ENCODE measurements at regions of chr16 and their contacts with region 1.

Region 1: GRCh38 chr16:86882586-86883280 is 304.4 kb downstream of the FOXL1 start:
- DNase-seq: peak; percentile 52 to 61
- ATAC-seq: peak; percentile 58 to 88 (median 74)
- H3K4me3 ChIP-seq: no peak overlapping the region
- H3K27ac ChIP-seq: no peak overlapping the region
- H3K4me1 ChIP-seq: peaks cover 0 to 14% (median 6%) of the 10 kb centered on the region in 9 donors
- H3K27me3 ChIP-seq: peaks cover 0 to 22% (median 9%) of the 10 kb centered on the region in 7 donors
- CTCF ChIP-seq: no peak

Region 2: GRCh38 chr16:86823895-86824671 is 58.6 kb before region 1 on chr16:
- intact Hi-C with region 1: loop called in 1 of 10 experiments (anchors 10 kb)
- DNase-seq: no peak
- ATAC-seq: no peak
- H3K4me3 ChIP-seq: no peak overlapping the region
- H3K27ac ChIP-seq: no peak overlapping the region
- H3K4me1 ChIP-seq: peaks cover 0 to 12% (median 6%) of the 10 kb centered on the region in 9 donors
- H3K27me3 ChIP-seq: peaks cover 0 to 58% (median 27%) of the 10 kb centered on the region in 7 donors
- CTCF ChIP-seq: no peak

Region 3: DNA sequence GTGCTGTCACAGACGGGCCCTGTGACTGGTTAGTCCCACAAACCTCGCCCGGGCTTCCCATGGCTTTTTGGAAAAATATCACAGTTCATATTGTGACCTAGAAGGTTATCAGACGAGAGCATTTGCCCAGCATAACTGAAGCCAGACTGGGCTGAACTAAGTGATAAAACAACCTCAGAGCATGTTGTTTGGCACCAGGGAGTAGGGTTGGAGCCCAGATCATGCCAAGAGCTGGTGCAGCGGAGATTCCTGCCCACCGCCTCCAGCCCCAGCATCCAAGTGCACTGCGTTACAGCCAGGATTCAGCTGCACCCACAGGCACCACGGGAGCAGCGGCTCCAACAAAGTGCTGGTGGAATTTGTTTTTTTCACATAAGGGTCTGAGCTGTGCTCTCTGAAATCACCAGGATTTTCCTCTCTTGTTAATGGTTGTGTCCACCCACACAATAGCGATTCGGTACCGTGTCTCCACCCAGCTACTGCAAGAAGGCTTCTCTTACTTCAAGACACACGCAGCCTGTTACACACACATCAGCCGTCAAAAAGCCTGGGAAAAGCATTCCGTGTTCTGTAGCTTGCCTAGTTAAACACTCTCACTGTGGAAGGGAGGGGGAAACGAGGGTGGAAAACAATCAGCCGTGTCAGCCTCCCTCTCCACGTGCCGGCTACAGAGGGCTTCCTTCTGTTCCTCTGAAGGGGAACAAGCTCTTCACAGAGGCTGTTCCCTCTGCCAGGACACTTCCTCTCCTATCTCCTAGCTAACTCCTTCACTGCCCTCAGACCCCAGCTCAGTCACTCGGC is 160.7 kb after region 1 on chr16:
- intact Hi-C with region 1: loop called in 1 of 10 experiments (anchors 10 kb)
- DNase-seq: peak in 1 of 2 donors; percentile 33
- ATAC-seq: peak; percentile 50 to 87 (median 66)
- H3K4me3 ChIP-seq: peak overlapping the region in 3 of 10 donors; percentile 13 to 32 (median 17)
- H3K27ac ChIP-seq: peak overlapping the region in 7 of 10 donors; percentile 31 to 65 (median 40)
- H3K4me1 ChIP-seq: peaks cover 0 to 20% (median 16%) of the 10 kb centered on the region in 9 donors
- H3K27me3 ChIP-seq: peaks cover 0 to 14% (median 0%) of the 10 kb centered on the region in 7 donors
- CTCF ChIP-seq: no peak